Ascending aorta (tissue), 2 donors: ENCODE measurements at regions of chr7 and their contacts with region 1.

Region 1: DNA sequence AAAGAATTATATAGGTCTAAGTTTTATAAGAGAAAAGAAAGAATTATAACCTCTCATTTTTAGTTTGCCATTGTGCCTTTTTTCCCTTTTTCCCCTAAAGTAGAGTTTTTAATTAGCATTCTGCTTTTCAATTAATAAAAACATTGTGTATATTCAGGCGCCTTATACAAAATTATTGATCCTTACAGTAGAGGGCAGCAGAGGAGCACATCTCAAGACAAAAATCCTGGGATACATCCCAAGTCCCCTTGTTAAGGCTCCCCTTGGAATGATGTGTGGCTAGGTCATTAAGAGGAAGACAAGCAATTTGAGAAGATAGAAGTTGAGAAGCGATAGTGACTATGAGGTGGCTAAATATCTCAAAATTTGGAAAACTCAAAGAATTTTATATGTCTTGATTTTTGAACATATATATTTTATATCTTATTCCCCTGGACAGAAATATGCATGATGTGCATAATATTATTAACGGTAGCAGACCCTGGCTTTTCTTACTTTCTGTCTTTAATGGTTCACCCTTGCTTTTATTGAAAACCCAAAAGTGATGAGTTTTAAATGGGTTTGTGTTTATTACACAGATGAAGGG is 19.1 kb upstream of the TPK1 start:
- DNase-seq: no peak
- H3K4me3 ChIP-seq: no peak overlapping the region
- H3K27ac ChIP-seq: no peak overlapping the region
- H3K4me1 ChIP-seq: no peaks in the 10 kb centered on the region
- H3K27me3 ChIP-seq: no peaks in the 10 kb centered on the region
- CTCF ChIP-seq: peak in 2 of 3 experiments; percentile 13 to 40

Region 2: GRCh38 chr7:144796919-144797318 is 58.0 kb before region 1 on chr7:
- intact Hi-C with region 1: loop called (anchors 5 kb)
- DNase-seq: no peak
- H3K4me3 ChIP-seq: no peak overlapping the region
- H3K27ac ChIP-seq: no peak overlapping the region
- H3K4me1 ChIP-seq: peaks cover 0 to 3% of the 10 kb centered on the region in 2 donors
- H3K27me3 ChIP-seq: no peaks in the 10 kb centered on the region
- CTCF ChIP-seq: no peak